ENCODE measurements at regions of chr3 and their contacts with region 1.

Region 1: GRCh38 chr3:176872771-176873209 is 324.5 kb downstream of the TBL1XR1 start:
- DNase-seq: no peak
- ATAC-seq: peak; percentile 36 to 69 (median 64)
- H3K4me3 ChIP-seq: no peak overlapping the region
- H3K27ac ChIP-seq: no peak overlapping the region
- H3K4me1 ChIP-seq: peaks cover 0 to 5% (median 0%) of the 10 kb centered on the region in 12 donors
- H3K27me3 ChIP-seq: no peaks in the 10 kb centered on the region
- CTCF ChIP-seq: peak; percentile 59 to 77 (median 68)
- POLR2A ChIP-seq: no peak

Region 2: GRCh38 chr3:176939022-176939817 is 66.4 kb after region 1 on chr3:
- intact Hi-C with region 1: loop called (anchors 1 to 5 kb)
- DNase-seq: peak in 2 of 5 donors; percentile 22 to 33
- ATAC-seq: peak; percentile 32 to 85 (median 79)
- H3K4me3 ChIP-seq: no peak overlapping the region
- H3K27ac ChIP-seq: no peak overlapping the region
- H3K4me1 ChIP-seq: peaks cover 0 to 5% (median 0%) of the 10 kb centered on the region in 12 donors
- H3K27me3 ChIP-seq: no peaks in the 10 kb centered on the region
- CTCF ChIP-seq: peak; percentile 55 to 87 (median 74)
- POLR2A ChIP-seq: no peak

Region 3: GRCh38 chr3:177928156-177928873 is 1055.5 kb after region 1 on chr3:
- intact Hi-C with region 1: no loop called
- DNase-seq: no peak
- ATAC-seq: peak in 3 of 4 donors; percentile 54 to 69 (median 61)
- H3K4me3 ChIP-seq: no peak overlapping the region
- H3K27ac ChIP-seq: no peak overlapping the region
- H3K4me1 ChIP-seq: peaks cover 0 to 34% (median 13%) of the 10 kb centered on the region in 12 donors
- H3K27me3 ChIP-seq: no peaks in the 10 kb centered on the region
- CTCF ChIP-seq: no peak
- POLR2A ChIP-seq: no peak

Measured in heart left ventricle (tissue), 16 donors.